MCF 10A (cell line): ENCODE measurements at regions of chr11 and their contacts with region 1.

Region 1: GRCh38 chr11:32323814-32324130 is 111.6 kb downstream of the WT1 start:
- DNase-seq: no peak
- H3K4me3 Mint-ChIP-seq: no peak overlapping the region
- H3K27ac Mint-ChIP-seq: no peak overlapping the region
- H3K4me1 Mint-ChIP-seq: no peaks in the 10 kb centered on the region
- H3K27me3 Mint-ChIP-seq: peaks cover 38% of the 10 kb centered on the region
- CTCF ChIP-seq: no peak

Region 2: DNA sequence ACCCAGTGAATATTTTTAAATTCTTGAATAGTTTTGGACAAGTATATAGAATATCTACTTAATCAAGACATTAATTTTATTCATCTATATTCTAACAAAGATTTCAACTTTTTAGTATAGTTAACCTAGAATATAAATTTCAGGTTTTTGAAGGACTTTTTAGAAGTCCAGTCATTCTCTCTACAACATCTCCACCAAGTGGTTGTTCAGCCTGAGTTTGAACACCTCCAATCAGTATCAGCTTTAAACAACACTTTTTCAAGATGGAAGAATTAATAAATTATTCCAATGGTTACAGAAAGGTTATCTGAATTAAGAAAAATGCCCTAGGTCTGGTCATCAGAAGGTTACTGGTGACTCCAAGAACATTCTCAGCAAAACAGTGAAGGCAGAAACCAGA is 291.6 kb after region 1 on chr11:
- CTCF ChIA-PET with region 1: interaction called, 6 read pairs
- POLR2A ChIA-PET with region 1: no interaction called
- intact Hi-C with region 1: loop called (anchors 1 kb)
- DNase-seq: peak; percentile 6
- H3K4me3 Mint-ChIP-seq: no peak overlapping the region
- H3K27ac Mint-ChIP-seq: no peak overlapping the region
- H3K4me1 Mint-ChIP-seq: no peaks in the 10 kb centered on the region
- H3K27me3 Mint-ChIP-seq: no peaks in the 10 kb centered on the region
- CTCF ChIP-seq: peak; percentile 15